IMR-90 (cell line): ENCODE measurements at regions of chr3 and their contacts with region 1.

Region 1: DNA sequence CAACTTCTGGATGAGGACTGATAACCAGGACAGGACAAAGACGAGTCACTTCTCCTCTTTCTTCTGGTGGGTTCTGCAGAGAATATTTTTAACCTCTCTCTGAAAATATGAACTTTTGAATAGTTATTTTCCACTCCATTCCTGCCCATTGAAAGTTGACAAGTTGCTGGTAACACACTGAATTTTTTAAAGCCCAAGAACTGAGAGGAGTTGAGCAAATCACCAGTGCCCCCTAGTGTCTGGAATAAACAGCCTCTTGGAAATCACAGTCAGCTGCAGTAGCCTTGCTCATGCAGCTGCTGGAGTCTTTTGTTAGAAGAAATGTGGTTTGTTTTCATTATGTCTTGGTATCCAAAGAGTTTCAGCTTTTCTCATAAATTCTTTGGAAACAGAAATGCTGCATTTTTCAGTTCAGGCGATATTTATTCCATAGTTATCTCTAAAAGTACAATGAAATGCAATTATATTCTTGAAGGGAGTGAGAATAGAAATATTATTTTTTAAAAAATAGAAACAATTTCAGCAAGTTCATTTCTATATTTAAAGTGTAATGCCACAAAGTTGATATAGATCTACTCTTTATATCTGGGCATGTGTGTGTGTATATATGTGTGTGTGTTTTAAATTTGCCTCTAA is 741.0 kb upstream of the CBLB start:
- DNase-seq: peak; percentile 93
- ATAC-seq: peak; percentile 90
- H3K4me3 ChIP-seq: no peak overlapping the region
- H3K27ac ChIP-seq: no peak overlapping the region
- H3K4me1 ChIP-seq: peaks cover 4% of the 10 kb centered on the region
- H3K27me3 ChIP-seq: no peaks in the 10 kb centered on the region
- CTCF ChIP-seq: peak; percentile 98
- POLR2A ChIP-seq: 0 out of 2 replicates have a peak, but pooled peaks have one; percentile 33
- RAD21 ChIP-seq: peak; percentile 97

Region 2: DNA sequence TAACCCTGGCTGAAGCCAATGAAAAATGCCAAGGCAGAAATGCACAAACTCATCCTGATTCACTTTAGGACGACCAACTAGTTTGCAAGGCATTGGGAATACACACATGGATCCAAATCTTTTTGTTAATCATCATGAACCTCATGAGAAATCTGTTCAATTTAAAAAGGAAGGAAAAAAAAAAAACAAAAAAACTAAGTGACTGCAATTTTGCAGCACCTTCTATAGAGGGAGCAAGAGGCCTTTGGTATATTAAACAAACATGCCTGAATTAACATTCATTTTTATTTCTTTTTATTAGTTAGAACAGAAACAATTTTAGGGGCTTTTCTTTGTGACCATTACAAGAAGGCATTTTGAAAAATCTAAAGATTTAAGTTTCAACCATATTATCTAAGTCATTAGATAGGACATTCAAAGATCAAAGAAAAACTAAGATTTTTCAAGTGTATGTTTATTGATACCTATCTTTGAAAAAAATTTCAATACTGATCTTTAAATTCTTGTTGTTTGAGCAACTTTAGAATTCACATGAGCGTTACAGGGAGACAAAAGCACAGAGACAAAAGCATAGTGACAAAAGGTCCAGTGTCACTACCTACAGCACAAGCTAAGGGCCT is 923.4 kb before region 1 on chr3:
- CTCF ChIA-PET with region 1: interaction called, 9 read pairs
- POLR2A ChIA-PET with region 1: no interaction called
- dilution Hi-C with region 1: no loop called
- in situ Hi-C with region 1: loop called (anchors 10 kb)
- intact Hi-C with region 1: loop called (anchors 1 kb)
- DNase-seq: peak; percentile 54
- ATAC-seq: peak; percentile 60; the same call in 1 of the 2 replicates
- H3K4me3 ChIP-seq: no peak overlapping the region
- H3K27ac ChIP-seq: no peak overlapping the region
- H3K4me1 ChIP-seq: peaks cover 2% of the 10 kb centered on the region; the same call in 1 of the 2 replicates
- H3K27me3 ChIP-seq: no peaks in the 10 kb centered on the region
- CTCF ChIP-seq: peak; percentile 83
- POLR2A ChIP-seq: no peak
- RAD21 ChIP-seq: peak; percentile 87

Region 3: GRCh38 chr3:105868742-105869530 is 740.8 kb before region 1 on chr3 and contains the start of gene CBLB:
- CTCF ChIA-PET with region 1: no interaction called
- POLR2A ChIA-PET with region 1: no interaction called
- dilution Hi-C with region 1: no loop called
- in situ Hi-C with region 1: no loop called
- intact Hi-C with region 1: loop called (anchors 1 kb)
- DNase-seq: peak; percentile 97
- ATAC-seq: peak; percentile 96
- H3K4me3 ChIP-seq: peak within 1 kb of the TSS; percentile 78
- H3K27ac ChIP-seq: peak within 1 kb of the TSS; percentile 92
- H3K4me1 ChIP-seq: peaks cover 2% of the 10 kb centered on the region; the same call in 1 of the 2 replicates
- H3K27me3 ChIP-seq: no peaks in the 10 kb centered on the region
- CTCF ChIP-seq: no peak
- POLR2A ChIP-seq: peak; percentile 84
- RAD21 ChIP-seq: no peak; the same call in 1 of the 2 replicates
- total RNA-seq, gene CBLB: 20.1 and 28.6 TPM in 2 replicates

Region 4: DNA sequence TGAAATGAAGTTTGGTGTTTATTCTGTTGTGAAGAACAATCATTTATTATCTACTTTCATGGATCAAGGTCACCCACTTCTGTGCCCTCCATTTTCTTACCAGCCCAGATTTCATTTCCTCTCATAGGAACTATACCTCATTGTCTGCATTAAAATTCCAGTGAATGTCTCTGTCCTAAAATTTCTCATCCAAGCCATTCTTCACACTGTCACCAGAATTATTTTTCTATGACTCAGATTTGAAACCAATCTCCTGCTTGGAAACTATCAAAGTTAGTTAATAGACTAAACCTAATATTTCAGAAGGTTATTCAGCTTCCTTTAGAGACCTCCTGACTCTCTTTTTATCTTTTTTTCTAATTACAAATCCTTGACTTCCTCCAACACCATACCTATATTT is 376.8 kb before region 1 on chr3:
- CTCF ChIA-PET with region 1: no interaction called
- POLR2A ChIA-PET with region 1: no interaction called
- dilution Hi-C with region 1: no loop called
- in situ Hi-C with region 1: no loop called
- intact Hi-C with region 1: loop called (anchors 10 kb)
- DNase-seq: no peak
- ATAC-seq: no peak
- H3K4me3 ChIP-seq: no peak overlapping the region
- H3K27ac ChIP-seq: no peak overlapping the region
- H3K4me1 ChIP-seq: no peaks in the 10 kb centered on the region
- H3K27me3 ChIP-seq: no peaks in the 10 kb centered on the region
- CTCF ChIP-seq: no peak
- POLR2A ChIP-seq: no peak
- RAD21 ChIP-seq: no peak

Region 5: DNA sequence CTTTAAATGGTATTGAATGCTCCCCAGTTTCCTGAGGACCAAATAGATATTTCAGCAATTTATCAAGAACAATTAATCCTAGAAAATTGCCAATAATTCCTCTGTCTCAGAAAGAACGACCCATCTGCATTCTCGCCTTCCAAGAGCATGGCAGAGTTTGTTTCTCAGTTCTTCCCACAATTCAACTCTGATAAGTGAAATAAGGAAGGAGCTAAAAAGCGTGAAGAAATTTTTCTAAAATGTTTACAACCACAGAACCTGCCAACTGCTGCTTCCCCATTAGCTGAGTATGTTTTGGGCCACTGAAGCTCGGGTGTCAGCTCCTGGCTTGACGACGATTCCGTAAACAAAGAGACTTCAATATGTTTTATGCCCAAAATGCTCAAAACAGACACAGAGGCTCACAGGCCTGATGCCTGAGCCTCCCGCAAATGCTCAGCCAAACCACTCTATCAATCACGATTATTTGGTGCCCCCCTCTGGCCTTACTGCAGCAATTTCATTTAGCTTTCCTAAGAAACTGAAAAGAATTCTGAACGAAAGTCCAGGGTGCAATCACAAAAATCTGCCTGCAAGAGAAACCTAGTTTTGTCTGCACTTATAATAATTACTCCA is 508.2 kb after region 1 on chr3:
- CTCF ChIA-PET with region 1: no interaction called
- POLR2A ChIA-PET with region 1: no interaction called
- dilution Hi-C with region 1: no loop called
- in situ Hi-C with region 1: no loop called
- intact Hi-C with region 1: loop called (anchors 1 kb)
- DNase-seq: peak; percentile 80
- ATAC-seq: peak; percentile 92
- H3K4me3 ChIP-seq: no peak overlapping the region
- H3K27ac ChIP-seq: no peak overlapping the region
- H3K4me1 ChIP-seq: peaks cover 2% of the 10 kb centered on the region; the same call in 1 of the 2 replicates
- H3K27me3 ChIP-seq: no peaks in the 10 kb centered on the region; the same call in 1 of the 2 replicates
- CTCF ChIP-seq: peak; percentile 73
- POLR2A ChIP-seq: peak; percentile 36; the same call in 1 of the 2 replicates
- RAD21 ChIP-seq: peak; percentile 88

Region 6: GRCh38 chr3:107271787-107272387 is 662.1 kb after region 1 on chr3:
- CTCF ChIA-PET with region 1: no interaction called
- POLR2A ChIA-PET with region 1: no interaction called
- dilution Hi-C with region 1: no loop called
- in situ Hi-C with region 1: no loop called
- intact Hi-C with region 1: no loop called
- DNase-seq: peak; percentile 61
- ATAC-seq: peak; percentile 83
- H3K4me3 ChIP-seq: no peak overlapping the region
- H3K27ac ChIP-seq: no peak overlapping the region
- H3K4me1 ChIP-seq: no peaks in the 10 kb centered on the region
- H3K27me3 ChIP-seq: no peaks in the 10 kb centered on the region
- CTCF ChIP-seq: peak; percentile 78
- POLR2A ChIP-seq: no peak
- RAD21 ChIP-seq: peak; percentile 84